PC-3 (cell line): ENCODE measurements at regions of chr19 and their contacts with region 1.

Region 1: DNA sequence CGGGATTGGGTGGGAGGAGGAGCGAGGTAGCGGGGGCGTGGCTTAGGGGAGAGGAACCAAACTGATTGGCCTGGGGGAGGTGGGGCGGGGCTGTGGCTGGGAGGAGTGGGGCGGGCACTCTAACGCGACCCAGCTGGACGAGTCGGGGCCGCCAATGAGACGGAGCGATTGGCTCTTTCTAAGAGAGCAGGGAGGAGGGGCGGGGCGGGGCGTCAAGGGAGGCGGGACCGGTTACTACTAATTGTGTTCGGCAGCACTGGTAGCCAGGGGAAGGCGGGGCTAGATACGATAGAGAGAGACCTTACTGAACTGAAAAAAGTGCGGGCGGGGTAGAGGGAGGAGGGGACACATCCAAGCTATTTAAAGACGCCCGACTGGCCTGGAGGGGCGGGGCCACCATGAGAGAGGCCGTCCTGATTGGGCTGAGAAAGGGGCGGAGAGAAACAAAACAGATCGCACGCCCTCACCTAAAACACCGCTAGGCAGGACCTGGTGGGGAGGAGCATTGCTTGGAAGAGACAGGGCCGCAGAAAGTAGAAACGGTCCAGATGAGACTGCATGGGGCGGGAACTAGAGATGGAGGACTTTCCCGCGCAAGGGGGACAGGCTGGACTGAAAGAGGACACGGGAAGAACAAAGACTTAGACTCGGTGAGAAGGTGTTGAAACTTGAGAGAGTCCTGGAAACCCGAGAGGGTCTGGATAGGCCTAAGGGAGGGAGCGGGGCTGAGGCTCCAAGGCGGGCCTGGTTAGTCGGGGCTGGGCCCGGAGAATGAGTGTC is at the start of gene KCNC3:
- DNase-seq: peak; percentile 99
- ATAC-seq: peak; percentile 75
- H3K4me3 ChIP-seq: peak within 1 kb of the TSS; percentile 64
- H3K27ac ChIP-seq: no peak within 1 kb of the TSS
- H3K4me1 ChIP-seq: peaks cover 16% of the 10 kb centered on the region; the same call in 1 of the 2 replicates
- H3K27me3 ChIP-seq: no peaks in the 10 kb centered on the region
- CTCF ChIP-seq: no peak
- total RNA-seq, gene KCNC3: 3.1 and 3.6 TPM in 2 replicates

Region 2: DNA sequence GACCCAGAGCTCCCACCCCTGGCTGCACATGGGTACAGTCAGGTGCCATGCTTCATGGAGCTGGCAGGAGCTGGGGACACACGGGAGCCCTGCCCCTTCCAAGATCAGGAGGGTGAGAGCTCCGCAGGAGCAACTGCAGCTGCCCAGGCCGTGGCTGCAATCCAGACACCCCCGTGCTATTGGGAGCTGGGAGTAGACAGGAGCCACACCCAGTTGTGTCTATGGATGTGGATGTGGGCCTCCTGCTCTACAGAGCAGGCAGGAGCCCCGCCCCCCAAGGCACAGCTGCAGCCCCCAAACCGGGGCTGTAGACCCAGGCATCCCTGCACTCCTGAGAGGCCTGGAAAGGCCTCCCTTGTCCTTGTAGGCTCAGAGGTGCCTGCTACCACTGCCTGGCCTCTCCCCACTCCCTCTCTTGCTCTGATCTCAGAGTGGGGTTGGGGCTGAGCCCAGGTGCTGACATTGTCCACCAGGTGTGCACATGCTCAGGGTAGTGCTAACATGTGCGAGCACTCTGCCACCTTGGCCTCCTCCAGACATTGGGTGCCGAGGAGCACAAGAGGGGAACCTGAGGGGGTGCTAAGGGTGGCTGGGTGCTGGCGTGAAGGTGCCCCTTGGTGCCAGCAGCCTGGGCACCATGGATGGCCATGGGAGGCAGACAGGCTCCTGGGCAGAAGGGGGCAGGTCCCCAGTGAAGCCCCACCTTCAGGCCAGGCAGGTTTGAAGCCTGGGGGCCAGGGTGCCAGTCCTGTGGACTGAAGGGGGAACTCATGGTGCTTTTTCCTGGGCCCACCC is 1382.7 kb before region 1 on chr19:
- CTCF ChIA-PET with region 1: no interaction called
- POLR2A ChIA-PET with region 1: no interaction called
- intact Hi-C with region 1: no loop called
- DNase-seq: no peak
- ATAC-seq: no peak
- H3K4me3 ChIP-seq: no peak overlapping the region
- H3K27ac ChIP-seq: no peak overlapping the region
- H3K4me1 ChIP-seq: no peaks in the 10 kb centered on the region
- H3K27me3 ChIP-seq: no peaks in the 10 kb centered on the region
- CTCF ChIP-seq: no peak

Region 3: DNA sequence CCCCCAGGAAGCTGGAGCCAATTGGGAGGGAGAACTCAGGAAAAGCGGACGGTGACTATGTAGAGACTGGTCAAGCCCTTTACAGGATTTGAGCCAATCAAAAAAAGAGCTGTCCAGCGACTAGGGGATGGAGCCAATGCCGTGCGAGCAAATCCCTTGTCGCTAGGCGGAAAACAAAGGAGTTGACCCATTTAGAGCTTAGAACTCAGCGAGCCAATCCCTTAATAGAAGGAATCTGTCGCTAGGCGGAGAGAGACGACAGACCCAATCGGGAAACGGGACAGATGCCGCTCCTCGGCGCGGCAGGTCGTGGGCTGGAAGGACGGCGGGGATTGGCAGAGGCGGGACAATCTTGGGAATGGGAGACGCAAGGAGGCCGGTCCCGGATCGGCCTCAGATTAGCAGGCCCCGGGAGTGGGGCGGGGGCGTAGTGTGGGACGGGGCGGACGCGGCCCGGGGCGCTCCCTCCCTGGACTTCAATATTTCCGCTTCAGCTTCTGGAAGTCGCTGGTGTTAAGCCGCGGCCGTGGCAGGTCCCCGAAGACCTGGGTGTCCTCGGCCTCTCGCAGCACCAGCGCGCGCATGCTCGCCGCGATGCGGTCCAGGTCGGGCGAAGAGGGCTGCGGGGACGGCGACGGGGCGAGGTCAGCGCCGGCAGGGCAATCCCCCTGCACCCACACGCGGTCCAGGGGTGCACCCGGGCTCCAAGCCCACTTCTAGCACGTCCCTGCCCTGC is 459.7 kb before region 1 on chr19:
- CTCF ChIA-PET with region 1: no interaction called
- POLR2A ChIA-PET with region 1: no interaction called
- intact Hi-C with region 1: loop called (anchors 2 kb)
- DNase-seq: peak; percentile 100
- ATAC-seq: peak; percentile 72
- H3K4me3 ChIP-seq: peak overlapping the region; percentile 68
- H3K27ac ChIP-seq: peak overlapping the region; percentile 23
- H3K4me1 ChIP-seq: peaks cover 29% of the 10 kb centered on the region
- H3K27me3 ChIP-seq: no peaks in the 10 kb centered on the region
- CTCF ChIP-seq: no peak

Region 4: GRCh38 chr19:50147462-50148423 is 181.6 kb before region 1 on chr19:
- CTCF ChIA-PET with region 1: interaction called, 19 read pairs
- POLR2A ChIA-PET with region 1: no interaction called
- intact Hi-C with region 1: no loop called
- DNase-seq: peak; percentile 97
- ATAC-seq: peak; percentile 93
- H3K4me3 ChIP-seq: peak overlapping the region; percentile 83
- H3K27ac ChIP-seq: no peak overlapping the region
- H3K4me1 ChIP-seq: no peaks in the 10 kb centered on the region
- H3K27me3 ChIP-seq: peaks cover 19% of the 10 kb centered on the region
- CTCF ChIP-seq: peak; percentile 92

Region 5: GRCh38 chr19:50252111-50252886 is 77.0 kb before region 1 on chr19:
- CTCF ChIA-PET with region 1: interaction called, 35 read pairs
- POLR2A ChIA-PET with region 1: interaction called, 5 read pairs
- intact Hi-C with region 1: loop called (anchors 1 kb)
- DNase-seq: peak; percentile 72
- ATAC-seq: peak; percentile 87
- H3K4me3 ChIP-seq: no peak overlapping the region
- H3K27ac ChIP-seq: no peak overlapping the region
- H3K4me1 ChIP-seq: no peaks in the 10 kb centered on the region
- H3K27me3 ChIP-seq: no peaks in the 10 kb centered on the region
- CTCF ChIP-seq: peak; percentile 94

Region 6: DNA sequence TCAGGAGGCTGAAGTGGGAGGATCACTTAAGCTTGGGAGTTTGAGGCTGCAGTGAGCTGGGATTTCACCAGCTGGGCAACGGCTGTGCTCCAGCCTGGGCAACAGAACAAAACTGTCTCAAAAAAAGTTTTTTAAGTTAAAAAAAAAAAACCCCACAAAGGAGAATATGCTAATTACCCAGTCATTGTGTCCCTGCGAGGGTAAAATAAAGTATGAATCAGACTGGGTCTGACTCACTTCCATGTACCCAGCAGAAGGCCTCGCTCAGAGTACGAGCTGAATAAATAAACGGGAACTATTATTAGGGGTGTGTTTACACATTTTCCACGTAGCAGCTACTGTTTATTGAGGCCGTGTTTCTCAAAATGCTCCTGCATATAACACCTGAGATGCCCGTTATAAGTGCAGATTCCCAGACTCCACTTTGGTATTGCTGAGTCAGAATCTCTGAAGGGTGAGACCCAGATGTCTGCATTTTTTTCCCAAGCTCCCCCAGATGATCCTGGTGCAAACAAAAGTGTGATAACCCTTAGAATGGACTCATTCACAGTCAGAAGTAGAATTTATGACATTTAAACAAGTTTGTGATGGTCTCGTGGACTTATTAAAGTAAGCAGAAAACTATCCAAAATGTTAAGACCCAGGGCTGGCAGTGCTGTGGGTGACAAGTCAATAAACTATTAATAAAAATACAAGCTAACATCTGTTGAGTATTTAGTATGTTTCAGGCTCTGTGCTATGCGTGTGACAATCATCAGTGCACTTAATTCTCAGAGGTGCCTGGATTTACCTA is 28.3 kb before region 1 on chr19:
- CTCF ChIA-PET with region 1: interaction called, 12 read pairs
- POLR2A ChIA-PET with region 1: no interaction called
- intact Hi-C with region 1: loop called (anchors 2 kb)
- DNase-seq: peak; percentile 94
- ATAC-seq: peak; percentile 99
- H3K4me3 ChIP-seq: peak overlapping the region; percentile 33; the same call in 1 of the 2 replicates
- H3K27ac ChIP-seq: peak overlapping the region; percentile 85
- H3K4me1 ChIP-seq: peaks cover 17% of the 10 kb centered on the region
- H3K27me3 ChIP-seq: no peaks in the 10 kb centered on the region
- CTCF ChIP-seq: no peak

Region 7: GRCh38 chr19:50311723-50312635 is 17.4 kb before region 1 on chr19:
- CTCF ChIA-PET with region 1: interaction called, 15 read pairs
- POLR2A ChIA-PET with region 1: interaction called, 5 read pairs
- intact Hi-C with region 1: no loop called
- DNase-seq: peak; percentile 56
- ATAC-seq: peak; percentile 51
- H3K4me3 ChIP-seq: peak overlapping the region; percentile 63
- H3K27ac ChIP-seq: no peak overlapping the region
- H3K4me1 ChIP-seq: peaks cover 4% of the 10 kb centered on the region
- H3K27me3 ChIP-seq: peaks cover 27% of the 10 kb centered on the region
- CTCF ChIP-seq: no peak

Region 8: GRCh38 chr19:50449236-50449899 is 120.0 kb after region 1 on chr19:
- CTCF ChIA-PET with region 1: no interaction called
- POLR2A ChIA-PET with region 1: no interaction called
- intact Hi-C with region 1: no loop called
- DNase-seq: peak; percentile 21
- ATAC-seq: no peak
- H3K4me3 ChIP-seq: no peak overlapping the region
- H3K27ac ChIP-seq: no peak overlapping the region
- H3K4me1 ChIP-seq: no peaks in the 10 kb centered on the region
- H3K27me3 ChIP-seq: no peaks in the 10 kb centered on the region
- CTCF ChIP-seq: no peak

Region 9: GRCh38 chr19:50511068-50511822 is 181.9 kb after region 1 on chr19 and contains the start of gene JOSD2:
- CTCF ChIA-PET with region 1: no interaction called
- POLR2A ChIA-PET with region 1: no interaction called
- intact Hi-C with region 1: loop called (anchors 1 kb)
- DNase-seq: peak; percentile 99
- ATAC-seq: peak; percentile 98
- H3K4me3 ChIP-seq: peak within 1 kb of the TSS; percentile 84
- H3K27ac ChIP-seq: peak within 1 kb of the TSS; percentile 20
- H3K4me1 ChIP-seq: 0 out of 2 replicates have a peak, but pooled peaks cover 7% of the 10 kb centered on the region
- H3K27me3 ChIP-seq: no peaks in the 10 kb centered on the region
- CTCF ChIP-seq: no peak
- total RNA-seq, gene JOSD2: 60.8 and 71.5 TPM in 2 replicates